ENCODE measurements at regions of chr4 and their contacts with region 1.

Region 1: DNA sequence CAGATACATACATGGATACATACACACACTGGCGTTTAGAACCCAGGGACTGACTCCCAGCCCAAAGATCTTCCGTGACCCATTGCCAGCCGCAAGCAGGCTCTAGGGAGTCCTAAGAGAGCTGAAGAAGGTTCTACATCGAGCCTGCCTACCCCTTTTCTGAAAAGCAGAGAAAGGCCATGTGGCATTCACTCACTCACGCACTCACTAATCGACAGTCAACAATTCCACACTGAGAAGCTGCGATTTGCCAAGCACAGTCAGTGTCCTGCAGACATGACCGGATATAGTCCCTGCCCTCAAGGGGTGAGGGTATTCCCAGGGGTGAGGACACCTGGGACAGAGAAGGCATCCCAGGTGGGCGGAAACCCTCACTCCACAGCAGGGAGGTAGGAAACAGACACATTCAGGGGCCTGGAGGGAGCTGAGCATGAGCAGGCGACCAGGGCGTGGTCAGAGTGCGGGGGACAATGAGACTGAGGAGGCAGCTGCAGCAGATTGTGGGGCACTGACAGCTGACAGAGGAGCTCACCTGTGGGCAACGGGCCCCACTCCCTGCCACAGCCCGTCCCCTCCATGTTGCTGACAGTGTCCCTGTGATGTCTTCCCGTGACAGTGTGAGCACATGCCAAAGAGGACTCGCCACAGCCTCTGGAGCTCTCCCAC is 13.2 kb upstream of the MAN2B2 start:
- DNase-seq: no peak
- ATAC-seq: no peak
- H3K4me3 ChIP-seq: no peak overlapping the region
- H3K4me3 Mint-ChIP-seq: peak overlapping the region in 2 of 3 donors; percentile 28 to 67
- H3K27ac ChIP-seq: no peak overlapping the region
- H3K27ac Mint-ChIP-seq: peak overlapping the region in 1 of 2 donors; percentile 10
- H3K4me1 ChIP-seq: peaks cover 0 to 14% of the 10 kb centered on the region in 2 experiments
- H3K4me1 Mint-ChIP-seq: peaks cover 7 to 19% (median 12%) of the 10 kb centered on the region in 3 donors
- H3K27me3 ChIP-seq: peaks cover 2 to 83% of the 10 kb centered on the region in 2 experiments
- H3K27me3 Mint-ChIP-seq: peaks cover 53 to 69% of the 10 kb centered on the region in 2 donors

Region 2: DNA sequence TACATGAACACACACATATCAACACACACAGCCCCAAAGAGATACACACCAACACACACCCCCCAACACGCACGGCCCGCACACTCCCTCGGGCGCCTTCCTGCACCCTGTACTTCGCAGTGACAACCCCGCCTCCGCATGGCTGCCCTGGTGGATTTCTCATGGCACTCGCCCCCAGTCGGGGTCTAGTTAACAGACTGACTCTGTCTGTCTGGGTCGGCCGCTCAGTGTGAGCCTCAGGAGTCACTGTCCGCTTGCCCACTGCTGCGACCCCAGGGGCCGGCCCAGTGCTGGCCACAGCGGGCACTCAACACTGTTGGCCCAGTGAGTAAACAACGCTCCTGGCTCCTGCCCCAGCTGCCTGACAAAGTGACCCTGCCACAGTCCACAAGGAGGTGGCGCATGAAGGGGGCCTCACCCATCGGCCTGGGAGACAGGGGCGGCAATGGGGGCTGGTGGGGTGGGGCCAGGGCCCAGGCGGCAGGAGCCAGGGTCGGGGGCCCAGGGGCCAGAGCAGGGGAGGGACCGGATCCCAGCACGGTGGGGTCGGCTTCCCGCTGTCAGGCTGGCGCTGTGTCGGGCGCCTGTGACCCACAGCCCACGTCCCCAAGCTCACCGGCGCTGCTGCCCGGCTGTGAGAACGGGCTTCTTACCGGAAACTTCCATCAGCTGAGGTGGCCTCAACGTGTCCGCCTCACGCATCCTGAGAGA is 27.1 kb before region 1 on chr4:
- CTCF ChIA-PET with region 1: no interaction called
- POLR2A ChIA-PET with region 1: no interaction called
- DNase-seq: no peak
- ATAC-seq: no peak
- H3K4me3 ChIP-seq: no peak overlapping the region
- H3K4me3 Mint-ChIP-seq: no peak overlapping the region
- H3K27ac ChIP-seq: no peak overlapping the region
- H3K27ac Mint-ChIP-seq: no peak overlapping the region
- H3K4me1 ChIP-seq: no peaks in the 10 kb centered on the region
- H3K4me1 Mint-ChIP-seq: no peaks in the 10 kb centered on the region
- H3K27me3 ChIP-seq: peaks cover 0 to 39% of the 10 kb centered on the region in 2 experiments
- H3K27me3 Mint-ChIP-seq: peaks cover 22 to 30% of the 10 kb centered on the region in 2 donors

Region 3: GRCh38 chr4:6546681-6547447 is 15.0 kb before region 1 on chr4:
- CTCF ChIA-PET with region 1: interaction called in 1 of 2 experiments, 10 read pairs
- POLR2A ChIA-PET with region 1: no interaction called
- DNase-seq: peak in 30 of 35 experiments; percentile 3 to 81 (median 32)
- ATAC-seq: peak in 3 of 4 experiments; percentile 36 to 52 (median 45)
- H3K4me3 ChIP-seq: no peak overlapping the region
- H3K4me3 Mint-ChIP-seq: no peak overlapping the region
- H3K27ac ChIP-seq: no peak overlapping the region
- H3K27ac Mint-ChIP-seq: no peak overlapping the region
- H3K4me1 ChIP-seq: no peaks in the 10 kb centered on the region
- H3K4me1 Mint-ChIP-seq: peaks cover 0 to 4% (median 2%) of the 10 kb centered on the region in 3 donors
- H3K27me3 ChIP-seq: peaks cover 0 to 66% of the 10 kb centered on the region in 2 experiments
- H3K27me3 Mint-ChIP-seq: peaks cover 43 to 61% of the 10 kb centered on the region in 2 donors

Measured in T-cell (primary cell).